ENCODE measurements at regions of chr13 and their contacts with region 1.

Region 1: GRCh38 chr13:41075034-41075433 is 13.7 kb downstream of the WBP4 start:
- DNase-seq: peak; percentile 54 to 80 (median 72)
- H3K4me3 ChIP-seq: no peak overlapping the region
- H3K27ac ChIP-seq: no peak overlapping the region
- H3K4me1 ChIP-seq: no peaks in the 10 kb centered on the region
- H3K27me3 ChIP-seq: no peaks in the 10 kb centered on the region

Region 2: DNA sequence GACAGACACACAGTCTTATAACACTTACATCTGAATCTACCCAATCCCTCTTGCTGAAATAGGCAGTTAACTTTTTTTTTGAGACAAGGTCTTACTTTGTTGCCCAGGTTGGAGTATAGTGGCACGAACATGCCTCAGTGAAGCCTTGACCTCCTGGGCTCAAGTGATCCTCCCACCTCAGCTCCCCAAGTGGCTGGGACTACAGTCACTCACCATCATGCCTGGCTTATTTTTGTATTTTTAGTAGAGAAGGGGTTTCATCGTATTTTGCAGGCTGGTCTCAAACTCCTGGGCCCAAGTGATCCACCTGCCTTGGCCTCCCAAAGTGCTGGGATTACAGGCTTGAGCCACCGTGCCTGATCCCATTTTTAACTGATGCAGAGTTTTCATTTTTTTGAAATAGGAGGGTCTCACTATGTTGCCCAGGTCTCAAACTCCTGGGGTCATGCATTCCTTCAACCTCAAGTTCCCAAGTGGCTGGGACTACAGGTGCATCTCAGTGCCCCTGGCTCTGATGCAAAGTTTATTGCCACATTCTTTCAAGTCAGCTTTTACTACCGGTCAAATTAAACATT is 63.6 kb before region 1 on chr13:
- CTCF ChIA-PET with region 1: no interaction called
- POLR2A ChIA-PET with region 1: no interaction called
- DNase-seq: no peak
- H3K4me3 ChIP-seq: no peak overlapping the region
- H3K27ac ChIP-seq: no peak overlapping the region
- H3K4me1 ChIP-seq: peaks cover 49 to 83% (median 68%) of the 10 kb centered on the region in 4 experiments
- H3K27me3 ChIP-seq: no peaks in the 10 kb centered on the region

Region 3: GRCh38 chr13:41222259-41222852 is 147.3 kb after region 1 on chr13:
- CTCF ChIA-PET with region 1: interaction called, 22 read pairs
- POLR2A ChIA-PET with region 1: no interaction called
- DNase-seq: peak; percentile 54 to 70 (median 67)
- H3K4me3 ChIP-seq: no peak overlapping the region
- H3K27ac ChIP-seq: no peak overlapping the region
- H3K4me1 ChIP-seq: no peaks in the 10 kb centered on the region
- H3K27me3 ChIP-seq: no peaks in the 10 kb centered on the region